ENCODE measurements at regions of chr4 and their contacts with region 1.

Region 1: GRCh38 chr4:1167247-1167949 is 5.0 kb downstream of the SPON2 start:
- DNase-seq: peak; percentile 95
- ATAC-seq: peak; percentile 92
- H3K4me3 Mint-ChIP-seq: peak overlapping the region; percentile 73
- H3K27ac Mint-ChIP-seq: peak overlapping the region; percentile 76
- H3K4me1 Mint-ChIP-seq: peaks cover 22% of the 10 kb centered on the region
- H3K27me3 Mint-ChIP-seq: peaks cover 15% of the 10 kb centered on the region

Region 2: GRCh38 chr4:1183985-1184773 is 16.8 kb after region 1 on chr4:
- CTCF ChIA-PET with region 1: interaction called, 23 read pairs
- POLR2A ChIA-PET with region 1: interaction called, 3 read pairs
- intact Hi-C with region 1: no loop called
- DNase-seq: peak; percentile 4
- ATAC-seq: no peak
- H3K4me3 Mint-ChIP-seq: no peak overlapping the region
- H3K27ac Mint-ChIP-seq: no peak overlapping the region
- H3K4me1 Mint-ChIP-seq: peaks cover 13% of the 10 kb centered on the region
- H3K27me3 Mint-ChIP-seq: peaks cover 3% of the 10 kb centered on the region

Region 3: DNA sequence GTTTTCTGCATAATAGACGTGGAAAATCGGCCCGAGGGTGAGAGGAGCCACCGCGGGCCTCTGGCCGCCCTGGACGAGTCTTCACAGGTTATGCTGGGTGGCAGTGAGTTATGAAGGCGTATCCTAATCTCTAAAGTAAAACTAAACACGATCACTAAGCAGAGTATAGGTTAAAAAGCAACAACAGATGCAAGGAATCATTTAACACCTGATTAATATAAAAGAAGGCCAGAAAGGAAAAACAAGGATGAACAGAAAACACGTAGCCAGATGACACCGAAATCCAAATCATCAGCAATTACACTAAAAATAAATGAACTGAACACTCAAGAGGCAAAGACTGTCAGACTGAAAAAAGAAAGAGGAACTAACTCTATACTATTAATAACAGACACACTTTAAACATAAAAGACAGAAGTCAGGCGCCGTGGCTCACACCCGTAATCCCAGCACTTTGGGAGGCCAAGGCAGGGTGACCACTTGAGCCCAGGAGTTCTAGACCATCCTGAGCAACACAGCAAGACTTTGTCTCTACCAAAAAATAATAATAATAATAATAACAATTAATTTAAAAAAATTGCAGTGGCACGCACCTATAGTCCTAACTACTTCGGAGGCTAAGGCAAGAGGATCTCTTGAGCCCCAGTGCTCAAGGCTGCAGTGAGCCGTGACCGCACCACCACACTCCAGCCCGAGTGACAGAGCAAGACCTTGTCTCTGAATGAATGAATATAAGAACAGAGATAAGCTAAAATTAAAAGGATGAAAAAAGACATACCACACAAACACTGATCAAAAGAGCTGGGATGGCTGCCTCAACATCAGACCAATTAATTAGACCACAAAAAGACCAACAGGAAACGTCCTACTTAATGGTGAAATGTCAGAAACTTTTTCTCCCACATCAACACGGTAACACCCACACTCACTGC is 51.5 kb after region 1 on chr4:
- CTCF ChIA-PET with region 1: no interaction called
- POLR2A ChIA-PET with region 1: no interaction called
- intact Hi-C with region 1: loop called (anchors 1 to 5 kb)
- DNase-seq: no peak
- ATAC-seq: no peak
- H3K4me3 Mint-ChIP-seq: no peak overlapping the region
- H3K27ac Mint-ChIP-seq: peak overlapping the region; percentile 26
- H3K4me1 Mint-ChIP-seq: peaks cover 33% of the 10 kb centered on the region
- H3K27me3 Mint-ChIP-seq: no peaks in the 10 kb centered on the region

Region 4: DNA sequence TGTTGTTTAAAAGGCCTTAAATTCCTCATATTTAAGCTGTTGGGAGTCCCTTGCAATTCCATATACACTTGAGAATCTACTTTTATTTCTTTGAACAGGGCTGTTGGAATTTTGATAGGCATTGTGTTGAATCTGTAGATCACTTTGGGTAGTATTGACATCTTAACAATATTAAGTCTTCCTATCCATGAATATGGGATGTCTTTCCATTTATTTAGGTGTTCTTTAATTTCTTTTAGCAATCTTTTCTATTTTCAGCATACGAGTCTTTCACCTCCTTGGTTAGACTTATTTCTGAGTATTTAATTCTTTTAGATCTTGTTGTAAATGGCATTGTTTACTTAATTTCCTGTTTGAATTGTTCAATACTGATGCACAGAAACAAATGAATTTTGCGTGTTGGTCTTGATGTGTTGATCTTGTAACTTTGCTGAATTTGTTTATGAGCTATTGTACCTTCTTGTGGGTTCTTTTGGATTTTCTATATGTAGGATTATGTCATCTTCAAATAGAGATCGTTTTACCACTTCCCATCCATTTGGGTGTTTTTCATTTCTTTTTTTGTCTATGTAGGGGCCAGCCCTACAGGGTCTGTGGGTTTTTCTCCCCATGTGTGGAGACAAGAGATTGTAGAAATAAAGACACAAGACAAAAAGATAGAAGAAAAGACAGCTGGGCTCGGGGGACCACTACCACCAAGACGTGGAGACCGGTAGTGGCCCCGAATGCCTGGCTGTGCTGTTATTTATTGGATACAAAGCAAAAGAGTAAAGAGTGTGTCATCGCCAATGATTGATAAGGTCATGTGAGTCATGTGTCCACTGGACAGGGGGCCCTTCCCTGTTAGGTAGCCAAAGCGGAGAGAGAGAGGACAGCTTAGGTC is 99.7 kb after region 1 on chr4:
- CTCF ChIA-PET with region 1: interaction called, 17 read pairs
- POLR2A ChIA-PET with region 1: interaction called, 3 read pairs
- intact Hi-C with region 1: loop called (anchors 1 kb)
- DNase-seq: peak; percentile 29
- ATAC-seq: peak; percentile 71
- H3K4me3 Mint-ChIP-seq: peak overlapping the region; percentile 63
- H3K27ac Mint-ChIP-seq: peak overlapping the region; percentile 90
- H3K4me1 Mint-ChIP-seq: peaks cover 13% of the 10 kb centered on the region
- H3K27me3 Mint-ChIP-seq: no peaks in the 10 kb centered on the region

Region 5: DNA sequence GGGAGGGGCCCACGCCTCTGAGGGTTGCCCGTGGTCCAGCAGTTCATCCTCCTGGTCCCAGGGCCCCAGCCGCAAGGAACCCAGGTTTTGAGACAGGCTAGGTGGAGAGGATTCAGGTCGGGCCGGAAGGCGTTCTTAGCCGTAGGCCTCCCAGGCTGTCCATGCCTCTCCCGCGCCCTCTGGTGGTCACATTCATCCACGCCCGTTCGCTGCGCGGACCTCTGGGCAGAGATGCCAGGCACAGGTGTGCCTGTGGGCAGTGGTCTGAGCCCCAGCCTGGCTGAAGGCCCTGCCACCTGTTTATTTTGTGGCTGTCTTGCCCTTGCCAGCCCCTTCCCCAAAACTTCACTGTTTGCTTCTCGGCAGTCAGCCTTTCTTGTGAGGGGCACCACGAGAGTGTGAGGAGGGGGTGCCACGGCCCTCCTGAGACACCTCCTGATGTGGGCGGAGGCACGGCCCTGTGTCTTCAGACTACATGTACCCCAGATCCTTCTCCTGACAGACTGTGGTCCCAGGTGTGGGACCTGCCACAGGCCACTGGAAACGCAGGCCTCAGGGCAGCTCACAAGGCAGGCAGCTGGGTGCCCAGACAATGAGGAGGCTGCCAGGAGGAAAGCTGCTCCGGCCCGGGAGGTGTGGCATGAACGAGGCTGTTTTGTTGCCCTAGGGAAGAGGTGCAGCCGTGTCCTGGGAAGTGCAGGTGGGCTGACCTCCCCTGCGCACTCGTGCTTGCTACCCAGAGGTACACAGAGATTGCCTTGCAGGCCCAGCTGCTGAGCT is 184.6 kb after region 1 on chr4:
- CTCF ChIA-PET with region 1: interaction called, 4 read pairs
- POLR2A ChIA-PET with region 1: no interaction called
- intact Hi-C with region 1: loop called (anchors 1 to 2 kb)
- DNase-seq: peak; percentile 95
- ATAC-seq: peak; percentile 50
- H3K4me3 Mint-ChIP-seq: no peak overlapping the region
- H3K27ac Mint-ChIP-seq: peak overlapping the region; percentile 83
- H3K4me1 Mint-ChIP-seq: peaks cover 31% of the 10 kb centered on the region
- H3K27me3 Mint-ChIP-seq: no peaks in the 10 kb centered on the region